Calu3 (cell line): ENCODE measurements at regions of chr17 and their contacts with region 1.

Region 1: DNA sequence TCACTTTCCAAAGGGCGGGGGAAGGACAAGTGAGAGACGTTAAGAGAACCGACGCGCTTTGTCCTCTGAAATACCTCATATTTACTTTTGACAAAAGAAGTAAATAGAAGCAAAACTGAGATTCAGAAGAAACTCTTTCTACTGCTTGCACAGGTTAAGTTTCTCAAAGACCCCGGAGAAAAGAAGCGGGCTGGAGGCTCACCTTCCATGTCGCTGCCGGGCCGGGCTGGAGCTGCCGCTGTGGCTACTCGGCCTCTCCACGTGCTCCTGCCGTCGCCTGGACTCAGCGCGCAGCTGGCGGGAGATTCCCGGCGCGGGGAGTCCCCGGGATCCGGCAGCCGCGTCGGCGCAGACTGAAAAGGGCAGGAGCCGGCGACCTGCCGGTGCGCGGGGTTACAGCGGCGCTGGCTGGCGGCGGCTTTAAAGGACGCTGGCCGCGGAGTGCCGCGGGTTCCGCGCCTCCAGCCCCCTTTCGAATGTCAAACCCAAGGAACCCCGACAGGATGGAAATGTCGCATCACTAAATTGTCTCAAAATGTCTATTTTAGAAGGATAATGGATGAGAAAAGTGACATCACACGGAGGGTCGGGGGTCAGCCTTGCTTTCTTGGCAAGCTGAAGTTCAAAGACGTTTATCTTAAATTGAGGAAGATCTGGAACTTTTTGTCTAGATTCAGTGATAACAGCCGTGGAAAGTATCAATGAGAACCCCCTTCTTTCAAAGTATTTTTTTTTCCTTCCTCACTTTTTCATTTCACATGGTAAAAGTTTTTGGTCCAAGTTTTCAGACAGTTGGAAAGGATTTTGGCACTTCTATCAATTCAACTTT is at the start of gene IKZF3:
- DNase-seq: peak; percentile 100
- H3K4me3 Mint-ChIP-seq: peak within 1 kb of the TSS; percentile 67
- H3K27ac Mint-ChIP-seq: peak within 1 kb of the TSS; percentile 31
- H3K4me1 Mint-ChIP-seq: peaks cover 38% of the 10 kb centered on the region
- H3K27me3 Mint-ChIP-seq: peaks cover 53% of the 10 kb centered on the region
- CTCF ChIP-seq: no peak
- total RNA-seq, gene IKZF3: 30.9 and 41.0 TPM in 2 replicates

Region 2: GRCh38 chr17:39648616-39649366 is 215.3 kb before region 1 on chr17:
- CTCF ChIA-PET with region 1: interaction called, 87 read pairs
- intact Hi-C with region 1: no loop called
- DNase-seq: peak; percentile 76
- H3K4me3 Mint-ChIP-seq: no peak overlapping the region
- H3K27ac Mint-ChIP-seq: no peak overlapping the region
- H3K4me1 Mint-ChIP-seq: peaks cover 33% of the 10 kb centered on the region
- H3K27me3 Mint-ChIP-seq: no peaks in the 10 kb centered on the region
- CTCF ChIP-seq: no peak

Region 3: DNA sequence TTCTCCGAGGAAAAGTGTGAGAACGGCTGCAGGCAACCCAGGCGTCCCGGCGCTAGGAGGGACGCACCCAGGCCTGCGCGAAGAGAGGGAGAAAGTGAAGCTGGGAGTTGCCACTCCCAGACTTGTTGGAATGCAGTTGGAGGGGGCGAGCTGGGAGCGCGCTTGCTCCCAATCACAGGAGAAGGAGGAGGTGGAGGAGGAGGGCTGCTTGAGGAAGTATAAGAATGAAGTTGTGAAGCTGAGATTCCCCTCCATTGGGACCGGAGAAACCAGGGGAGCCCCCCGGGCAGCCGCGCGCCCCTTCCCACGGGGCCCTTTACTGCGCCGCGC is 164.3 kb before region 1 on chr17 and contains the start of gene ERBB2:
- CTCF ChIA-PET with region 1: interaction called, 69 read pairs
- intact Hi-C with region 1: no loop called
- DNase-seq: peak; percentile 100
- H3K4me3 Mint-ChIP-seq: peak within 1 kb of the TSS; percentile 71
- H3K27ac Mint-ChIP-seq: peak within 1 kb of the TSS; percentile 67
- H3K4me1 Mint-ChIP-seq: peaks cover 68% of the 10 kb centered on the region
- H3K27me3 Mint-ChIP-seq: no peaks in the 10 kb centered on the region
- CTCF ChIP-seq: no peak
- total RNA-seq, gene ERBB2: 4,829 and 4,830 TPM in 2 replicates

Region 4: DNA sequence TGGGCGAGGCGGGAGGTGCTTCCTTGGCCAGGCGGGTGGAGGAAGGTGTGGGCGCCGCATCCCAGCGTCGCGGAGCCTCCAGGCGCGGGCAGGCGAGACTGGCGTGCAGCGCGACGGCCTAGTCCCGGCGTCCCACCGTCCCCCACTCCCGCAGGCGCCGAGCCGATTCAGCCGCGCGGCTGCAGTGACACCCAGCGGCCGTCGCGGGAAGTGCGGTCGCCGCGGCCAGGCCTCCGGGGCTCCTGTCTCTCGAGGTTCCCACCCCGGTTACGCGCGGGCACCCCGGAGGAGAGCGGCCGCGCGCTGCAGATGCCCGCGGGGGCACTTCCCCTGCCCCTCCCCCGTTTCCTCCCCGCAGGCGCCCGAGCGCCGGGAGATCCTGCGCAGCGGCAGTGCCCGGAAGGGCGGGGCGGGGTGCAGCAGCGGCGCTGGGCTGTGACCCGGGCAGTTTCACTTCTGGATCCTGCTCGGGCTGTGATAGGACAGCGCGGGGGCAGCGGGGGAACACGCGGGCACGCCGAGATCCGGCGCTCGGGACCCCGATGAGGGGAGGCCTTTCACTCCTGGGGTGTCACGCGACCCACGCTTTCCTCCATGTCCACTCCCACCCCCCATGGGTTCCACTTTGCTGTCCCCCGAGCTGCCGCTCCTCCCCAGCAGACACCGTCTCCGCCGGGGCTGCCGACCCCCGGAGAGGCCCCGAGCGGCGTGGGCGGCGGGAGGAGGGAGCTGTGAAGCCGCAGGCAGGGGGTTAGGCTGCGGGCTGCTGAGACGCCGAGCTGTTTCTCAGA is 109.8 kb before region 1 on chr17:
- CTCF ChIA-PET with region 1: interaction called, 174 read pairs
- intact Hi-C with region 1: loop called (anchors 1 kb)
- DNase-seq: peak; percentile 100
- H3K4me3 Mint-ChIP-seq: peak overlapping the region; percentile 63
- H3K27ac Mint-ChIP-seq: peak overlapping the region; percentile 12
- H3K4me1 Mint-ChIP-seq: peaks cover 58% of the 10 kb centered on the region
- H3K27me3 Mint-ChIP-seq: peaks cover 35% of the 10 kb centered on the region
- CTCF ChIP-seq: no peak

Region 5: DNA sequence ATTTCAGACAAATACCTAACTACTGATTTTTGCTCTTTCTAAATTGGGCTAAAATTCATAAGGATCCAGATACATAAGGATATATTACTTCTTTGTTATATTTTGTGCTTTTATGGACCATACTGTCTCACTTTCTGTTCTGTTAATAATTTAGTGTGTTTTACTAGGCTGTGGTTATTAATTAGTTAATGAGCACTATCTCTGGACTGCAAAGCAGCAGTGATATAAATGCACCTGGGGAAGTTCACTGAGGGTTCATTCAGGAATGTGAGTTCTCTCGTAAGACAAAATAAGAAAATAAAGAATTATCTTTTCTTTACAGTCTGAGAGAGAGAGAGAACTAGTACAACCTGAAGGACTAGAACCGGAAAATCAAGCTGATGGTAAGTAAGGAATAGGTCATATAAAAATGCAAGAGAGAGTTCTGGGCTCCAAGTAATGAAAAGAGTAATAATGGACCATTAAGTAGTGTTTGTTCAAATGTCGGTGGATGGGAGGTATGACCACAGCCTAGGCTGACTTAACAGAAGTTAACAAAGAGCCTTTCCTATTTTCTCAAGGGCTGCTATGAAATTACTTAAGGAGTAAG is 55.6 kb before region 1 on chr17:
- CTCF ChIA-PET with region 1: interaction called, 130 read pairs
- intact Hi-C with region 1: no loop called
- DNase-seq: peak; percentile 98
- H3K4me3 Mint-ChIP-seq: peak overlapping the region; percentile 1
- H3K27ac Mint-ChIP-seq: peak overlapping the region; percentile 16
- H3K4me1 Mint-ChIP-seq: peaks cover 37% of the 10 kb centered on the region
- H3K27me3 Mint-ChIP-seq: no peaks in the 10 kb centered on the region
- CTCF ChIP-seq: no peak

Region 6: GRCh38 chr17:39845052-39845846 is 18.9 kb before region 1 on chr17:
- CTCF ChIA-PET with region 1: interaction called, 498 read pairs
- intact Hi-C with region 1: no loop called
- DNase-seq: peak; percentile 81
- H3K4me3 Mint-ChIP-seq: no peak overlapping the region
- H3K27ac Mint-ChIP-seq: no peak overlapping the region
- H3K4me1 Mint-ChIP-seq: peaks cover 10% of the 10 kb centered on the region
- H3K27me3 Mint-ChIP-seq: no peaks in the 10 kb centered on the region
- CTCF ChIP-seq: no peak

Region 7: DNA sequence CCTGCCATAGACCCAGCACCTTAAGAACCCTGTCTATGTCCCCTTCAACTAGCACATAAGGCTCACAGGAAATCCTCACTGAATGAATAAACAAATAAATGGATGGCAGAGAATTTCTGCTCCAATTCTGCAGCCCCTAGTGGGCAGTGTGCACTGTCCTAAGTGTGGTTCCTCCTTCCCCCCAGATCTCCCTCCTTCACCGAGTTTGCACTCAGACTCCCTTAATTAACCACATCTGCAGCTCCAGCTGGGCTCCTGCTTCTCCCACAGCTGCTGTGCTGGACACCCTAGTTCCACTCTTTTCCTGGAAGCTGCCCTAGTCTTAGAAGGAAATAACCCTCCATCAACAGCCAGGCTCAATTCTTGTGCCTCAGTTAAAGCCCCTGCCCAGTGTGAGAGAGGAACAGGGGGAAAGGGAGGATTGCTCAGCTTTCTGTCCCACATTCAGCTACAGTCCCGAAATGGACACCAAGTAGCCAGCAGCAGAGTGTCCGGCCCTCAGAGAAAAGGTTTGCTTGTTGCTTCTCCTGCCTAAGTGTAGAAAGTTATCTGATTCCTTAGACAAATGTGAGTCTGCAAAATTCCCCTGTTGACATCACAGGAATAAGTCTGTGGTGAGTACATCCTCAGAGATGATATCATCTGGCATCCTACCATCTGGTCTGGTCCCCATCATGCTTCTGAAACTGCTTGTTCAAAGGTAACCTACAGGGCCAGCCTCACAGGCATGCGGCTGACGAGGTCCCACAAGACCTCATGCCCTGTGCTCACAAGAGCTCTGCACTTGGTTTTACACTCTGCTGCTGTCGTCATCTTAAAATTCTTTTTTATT is 75.7 kb after region 1 on chr17:
- CTCF ChIA-PET with region 1: interaction called, 177 read pairs
- intact Hi-C with region 1: no loop called
- DNase-seq: peak; percentile 76
- H3K4me3 Mint-ChIP-seq: no peak overlapping the region
- H3K27ac Mint-ChIP-seq: no peak overlapping the region
- H3K4me1 Mint-ChIP-seq: peaks cover 12% of the 10 kb centered on the region
- H3K27me3 Mint-ChIP-seq: peaks cover 63% of the 10 kb centered on the region
- CTCF ChIP-seq: no peak